Calu3 (cell line): ENCODE measurements at regions of chr7 and their contacts with region 1.

Region 1: GRCh38 chr7:44587843-44588711 is 6.0 kb upstream of the TMED4 start:
- DNase-seq: peak; percentile 81
- H3K4me3 Mint-ChIP-seq: no peak overlapping the region
- H3K27ac Mint-ChIP-seq: no peak overlapping the region
- H3K4me1 Mint-ChIP-seq: peaks cover 12% of the 10 kb centered on the region
- H3K27me3 Mint-ChIP-seq: no peaks in the 10 kb centered on the region
- CTCF ChIP-seq: peak; percentile 79

Region 2: DNA sequence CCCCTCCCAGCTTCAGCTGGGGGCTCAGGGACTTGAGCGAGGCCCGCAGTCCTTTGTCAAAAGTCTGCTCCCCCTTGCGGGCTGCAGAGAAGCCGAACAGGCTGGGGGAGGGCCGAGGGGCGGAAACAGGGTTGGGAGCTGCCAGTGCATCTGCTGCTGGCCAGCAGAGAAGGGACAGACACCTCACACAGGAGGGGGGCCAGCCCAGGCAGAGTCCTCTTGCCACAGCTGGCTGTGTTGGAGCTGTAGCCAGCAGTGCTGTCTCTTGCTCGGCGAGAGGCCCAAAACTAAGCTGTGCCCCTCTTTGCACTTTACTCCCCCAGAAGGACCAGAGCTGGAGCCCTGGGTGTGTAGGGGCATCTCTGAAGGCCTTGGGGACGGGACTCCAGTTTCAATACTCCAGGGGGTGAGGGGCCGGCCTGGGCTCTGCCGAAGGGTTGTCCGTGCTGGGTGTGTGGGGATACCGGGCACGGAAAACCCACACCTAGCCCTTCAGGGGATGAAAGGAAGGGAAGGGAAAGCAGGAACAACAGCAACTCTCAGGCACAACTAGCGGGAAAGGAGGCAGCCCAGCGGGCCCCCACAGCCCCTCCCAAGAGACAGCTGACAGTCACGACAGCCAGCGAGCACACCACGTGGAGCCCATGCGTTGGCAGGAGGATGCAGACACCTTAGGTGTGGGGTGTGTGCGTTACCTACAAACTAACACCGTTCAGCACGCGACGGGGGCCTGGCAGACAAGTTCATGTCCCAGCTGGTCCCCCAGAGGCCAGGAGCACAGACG is 369.5 kb before region 1 on chr7:
- CTCF ChIA-PET with region 1: no interaction called
- intact Hi-C with region 1: no loop called
- DNase-seq: no peak
- H3K4me3 Mint-ChIP-seq: no peak overlapping the region
- H3K27ac Mint-ChIP-seq: no peak overlapping the region
- H3K4me1 Mint-ChIP-seq: no peaks in the 10 kb centered on the region
- H3K27me3 Mint-ChIP-seq: peaks cover 46% of the 10 kb centered on the region
- CTCF ChIP-seq: no peak

Region 3: DNA sequence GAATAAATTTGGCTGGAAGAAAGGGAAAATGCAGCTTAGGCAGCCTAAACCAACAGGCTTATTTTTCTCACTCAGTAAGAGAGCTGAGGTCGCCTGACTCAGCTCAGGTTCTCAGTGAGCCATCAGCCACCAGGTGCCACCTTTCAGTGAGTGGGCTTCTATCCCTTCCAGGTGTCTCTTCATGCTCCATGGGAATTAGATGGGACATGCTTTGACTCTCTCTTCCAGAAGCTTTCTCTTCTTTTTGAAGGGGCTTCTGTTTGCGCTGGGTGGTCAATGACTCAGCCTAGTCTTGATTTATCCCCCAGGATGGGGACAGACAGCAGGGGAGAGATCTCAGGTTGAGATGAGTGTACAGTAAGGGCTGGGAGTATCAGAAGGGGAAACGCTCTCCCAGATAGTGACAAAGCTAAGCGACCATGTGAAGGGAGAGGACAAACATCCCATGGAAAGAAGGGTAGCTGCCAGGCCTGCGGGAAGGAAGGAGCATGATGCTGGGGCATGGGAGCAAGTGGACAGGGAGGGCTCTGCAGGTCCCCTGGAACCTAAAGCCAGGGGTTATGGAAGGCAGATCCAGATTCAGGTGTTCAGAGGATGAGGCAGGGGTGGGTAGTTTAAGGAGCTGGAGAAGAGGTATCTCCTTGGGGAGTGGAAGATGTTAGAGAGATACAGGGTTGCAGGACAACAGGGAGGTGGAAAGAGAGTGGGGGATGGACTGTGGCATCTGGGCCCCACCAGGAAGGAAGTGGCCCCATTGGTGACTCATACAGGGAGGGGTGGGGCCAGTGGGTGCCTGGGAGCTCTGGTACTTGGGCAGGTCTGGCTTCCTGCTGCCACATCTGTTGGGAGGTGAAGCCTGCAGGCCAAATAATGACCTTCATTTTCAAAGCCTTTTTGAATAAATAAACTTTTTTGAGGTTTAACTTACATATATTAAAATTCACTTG is 50.8 kb after region 1 on chr7:
- CTCF ChIA-PET with region 1: interaction called, 3 read pairs
- intact Hi-C with region 1: loop called (anchors 5 kb)
- DNase-seq: peak; percentile 97
- H3K4me3 Mint-ChIP-seq: peak overlapping the region; percentile 33
- H3K27ac Mint-ChIP-seq: peak overlapping the region; percentile 94
- H3K4me1 Mint-ChIP-seq: peaks cover 67% of the 10 kb centered on the region
- H3K27me3 Mint-ChIP-seq: no peaks in the 10 kb centered on the region
- CTCF ChIP-seq: no peak

Region 4: GRCh38 chr7:44797329-44798251 is 209.5 kb after region 1 on chr7:
- CTCF ChIA-PET with region 1: no interaction called
- intact Hi-C with region 1: loop called (anchors 5 kb)
- DNase-seq: peak; percentile 95
- H3K4me3 Mint-ChIP-seq: peak overlapping the region; percentile 83
- H3K27ac Mint-ChIP-seq: peak overlapping the region; percentile 97
- H3K4me1 Mint-ChIP-seq: peaks cover 25% of the 10 kb centered on the region
- H3K27me3 Mint-ChIP-seq: no peaks in the 10 kb centered on the region
- CTCF ChIP-seq: peak; percentile 70

Region 5: GRCh38 chr7:44921607-44922359 is 333.7 kb after region 1 on chr7:
- CTCF ChIA-PET with region 1: no interaction called
- intact Hi-C with region 1: loop called (anchors 1 kb)
- DNase-seq: peak; percentile 98
- H3K4me3 Mint-ChIP-seq: no peak overlapping the region
- H3K27ac Mint-ChIP-seq: no peak overlapping the region
- H3K4me1 Mint-ChIP-seq: no peaks in the 10 kb centered on the region
- H3K27me3 Mint-ChIP-seq: peaks cover 29% of the 10 kb centered on the region
- CTCF ChIP-seq: peak; percentile 96

Region 6: GRCh38 chr7:45136106-45137060 is 548.3 kb after region 1 on chr7:
- CTCF ChIA-PET with region 1: no interaction called
- intact Hi-C with region 1: loop called (anchors 1 kb)
- DNase-seq: peak; percentile 78
- H3K4me3 Mint-ChIP-seq: no peak overlapping the region
- H3K27ac Mint-ChIP-seq: no peak overlapping the region
- H3K4me1 Mint-ChIP-seq: peaks cover 7% of the 10 kb centered on the region
- H3K27me3 Mint-ChIP-seq: peaks cover 66% of the 10 kb centered on the region
- CTCF ChIP-seq: peak; percentile 91

Region 7: GRCh38 chr7:45146531-45147379 is 558.7 kb after region 1 on chr7:
- CTCF ChIA-PET with region 1: no interaction called
- intact Hi-C with region 1: no loop called
- DNase-seq: peak; percentile 29
- H3K4me3 Mint-ChIP-seq: no peak overlapping the region
- H3K27ac Mint-ChIP-seq: no peak overlapping the region
- H3K4me1 Mint-ChIP-seq: no peaks in the 10 kb centered on the region
- H3K27me3 Mint-ChIP-seq: peaks cover 75% of the 10 kb centered on the region
- CTCF ChIP-seq: no peak